ENCODE measurements at regions of chr14 and their contacts with region 1.

Region 1: DNA sequence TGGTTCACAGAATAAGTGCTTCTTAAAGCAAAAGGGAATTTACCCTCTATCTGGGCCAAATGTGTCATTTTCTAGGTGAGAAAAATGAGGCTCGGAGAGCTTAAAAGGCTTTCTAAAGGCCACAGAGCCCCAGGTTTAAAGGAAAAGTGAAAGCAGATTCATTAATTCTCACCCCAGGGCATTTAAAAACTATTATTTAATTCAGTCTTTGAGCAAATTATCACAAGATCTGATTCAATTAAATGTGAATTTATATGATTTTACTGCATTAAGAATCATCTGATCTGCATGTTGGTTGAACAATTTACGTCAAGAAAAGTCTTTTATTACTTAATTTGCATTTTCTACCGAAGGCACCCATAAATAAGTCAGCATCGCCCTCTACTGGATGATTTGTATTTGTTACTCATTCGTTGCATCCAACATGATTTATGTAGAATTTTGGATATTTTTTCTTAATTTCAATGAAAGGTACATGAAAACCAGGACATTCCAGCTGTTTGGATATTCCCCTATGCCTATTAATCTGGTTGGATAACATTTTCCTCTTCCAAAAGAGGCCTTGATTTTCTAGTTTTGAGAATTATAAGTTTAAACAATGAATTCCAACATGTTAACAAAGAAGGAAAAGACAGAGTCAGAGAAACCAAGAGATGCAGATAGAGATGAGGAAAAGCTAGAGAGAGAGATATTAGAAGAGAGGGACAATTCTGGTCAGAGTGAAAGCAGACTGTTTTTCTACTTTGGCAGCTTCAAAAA is 19.1 kb upstream of the DHRS7 start:
- DNase-seq: peak in 3 of 5 donors; percentile 12 to 72 (median 71)
- H3K4me3 ChIP-seq: peak overlapping the region; percentile 42
- H3K4me3 Mint-ChIP-seq: peak overlapping the region; percentile 74 to 89 (median 80)
- H3K27ac ChIP-seq: peak overlapping the region; percentile 12
- H3K27ac Mint-ChIP-seq: peak overlapping the region; percentile 48 to 97 (median 92)
- H3K4me1 ChIP-seq: peaks cover 6% of the 10 kb centered on the region
- H3K4me1 Mint-ChIP-seq: peaks cover 7 to 15% (median 11%) of the 10 kb centered on the region in 3 donors
- H3K27me3 ChIP-seq: no peaks in the 10 kb centered on the region
- H3K27me3 Mint-ChIP-seq: peaks cover 0 to 2% of the 10 kb centered on the region in 2 donors

Region 2: DNA sequence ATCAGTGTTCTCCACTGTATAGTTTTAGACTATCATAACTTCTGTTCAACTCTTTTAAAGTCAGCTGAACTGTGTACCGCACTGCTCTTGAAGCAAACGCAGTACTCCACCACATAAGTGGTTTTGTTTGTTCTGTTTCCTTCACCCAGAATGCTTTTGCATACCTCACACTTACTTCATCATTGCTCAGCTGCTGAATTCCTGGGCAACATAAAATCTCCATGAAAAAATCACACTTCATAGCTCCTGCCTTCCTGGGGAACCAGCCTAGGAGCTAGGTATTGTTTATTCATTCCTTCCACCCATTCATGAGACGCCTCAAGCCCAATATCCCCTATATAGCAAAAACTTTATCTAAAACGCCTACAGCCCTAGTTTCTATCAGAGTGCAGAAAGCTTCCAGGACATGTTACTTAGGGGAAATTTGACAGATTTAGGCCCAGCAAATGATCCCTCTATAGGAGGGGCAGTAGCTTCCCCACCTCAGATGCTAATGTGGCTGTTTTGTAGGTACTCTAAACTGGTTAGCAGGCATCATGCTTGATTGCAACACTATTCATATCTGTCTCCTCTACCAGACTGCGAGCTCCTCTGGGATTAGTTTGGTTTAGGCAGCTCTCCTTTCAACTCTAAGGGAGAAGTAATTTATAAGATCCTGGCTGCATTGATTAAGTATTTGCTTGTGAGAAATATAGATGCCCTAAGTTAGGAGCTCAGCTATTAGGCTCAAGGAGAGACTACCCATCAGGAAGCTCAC is 219.9 kb before region 1 on chr14:
- CTCF ChIA-PET with region 1: interaction called, 131 read pairs
- POLR2A ChIA-PET with region 1: interaction called, 3 read pairs
- DNase-seq: peak in 1 of 5 donors; percentile 44
- H3K4me3 ChIP-seq: no peak overlapping the region
- H3K4me3 Mint-ChIP-seq: peak overlapping the region; percentile 83 to 94 (median 90)
- H3K27ac ChIP-seq: no peak overlapping the region
- H3K27ac Mint-ChIP-seq: peak overlapping the region in 7 of 8 donors; percentile 56 to 98 (median 93)
- H3K4me1 ChIP-seq: no peaks in the 10 kb centered on the region
- H3K4me1 Mint-ChIP-seq: peaks cover 10 to 23% (median 14%) of the 10 kb centered on the region in 3 donors
- H3K27me3 ChIP-seq: no peaks in the 10 kb centered on the region
- H3K27me3 Mint-ChIP-seq: peaks cover 4 to 6% of the 10 kb centered on the region in 2 donors

Region 3: GRCh38 chr14:60064491-60065072 is 119.7 kb before region 1 on chr14:
- CTCF ChIA-PET with region 1: interaction called, 71 read pairs
- POLR2A ChIA-PET with region 1: no interaction called
- DNase-seq: peak in 2 of 5 donors; percentile 23 to 29
- H3K4me3 ChIP-seq: no peak overlapping the region
- H3K4me3 Mint-ChIP-seq: no peak overlapping the region
- H3K27ac ChIP-seq: no peak overlapping the region
- H3K27ac Mint-ChIP-seq: no peak overlapping the region
- H3K4me1 ChIP-seq: no peaks in the 10 kb centered on the region
- H3K4me1 Mint-ChIP-seq: no peaks in the 10 kb centered on the region
- H3K27me3 ChIP-seq: no peaks in the 10 kb centered on the region
- H3K27me3 Mint-ChIP-seq: peaks cover 2 to 17% of the 10 kb centered on the region in 2 donors

Region 4: DNA sequence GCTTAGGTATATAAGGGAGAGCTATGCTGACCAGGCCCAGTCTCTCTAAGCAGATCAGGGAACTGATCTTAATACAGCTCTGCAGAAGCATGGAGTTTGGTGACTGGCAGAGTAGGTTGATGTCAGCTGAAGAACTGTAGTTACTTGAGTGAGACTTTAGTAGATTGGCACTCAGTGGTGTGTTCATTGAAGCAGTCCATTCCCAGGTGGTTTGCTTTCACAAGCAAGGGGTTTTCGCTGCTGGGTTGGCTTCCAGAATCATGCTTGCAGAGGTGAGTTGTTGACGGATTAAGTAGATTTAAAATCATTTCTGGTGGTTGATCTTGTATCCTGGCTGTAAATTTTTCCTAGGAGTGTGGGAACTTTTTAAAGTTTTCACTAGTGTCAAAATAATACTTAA is 12.6 kb before region 1 on chr14:
- CTCF ChIA-PET with region 1: interaction called, 49 read pairs
- POLR2A ChIA-PET with region 1: no interaction called
- DNase-seq: no peak
- H3K4me3 ChIP-seq: no peak overlapping the region
- H3K4me3 Mint-ChIP-seq: no peak overlapping the region
- H3K27ac ChIP-seq: no peak overlapping the region
- H3K27ac Mint-ChIP-seq: no peak overlapping the region
- H3K4me1 ChIP-seq: peaks cover under 1% of the 10 kb centered on the region
- H3K4me1 Mint-ChIP-seq: peaks cover under 1 to 2% (median 2%) of the 10 kb centered on the region in 3 donors
- H3K27me3 ChIP-seq: no peaks in the 10 kb centered on the region
- H3K27me3 Mint-ChIP-seq: peaks cover 2 to 6% of the 10 kb centered on the region in 2 donors

Region 5: GRCh38 chr14:60248697-60249318 is 64.5 kb after region 1 on chr14 and contains the start of gene PPM1A:
- CTCF ChIA-PET with region 1: interaction called, 16 read pairs
- POLR2A ChIA-PET with region 1: interaction called, 4 read pairs
- DNase-seq: peak; percentile 93 to 97 (median 94)
- H3K4me3 ChIP-seq: peak within 1 kb of the TSS; percentile 78
- H3K4me3 Mint-ChIP-seq: peak within 1 kb of the TSS; percentile 90 to 99 (median 95)
- H3K27ac ChIP-seq: peak within 1 kb of the TSS; percentile 94
- H3K27ac Mint-ChIP-seq: peak within 1 kb of the TSS; percentile 97 to 100 (median 100)
- H3K4me1 ChIP-seq: peaks cover 24% of the 10 kb centered on the region
- H3K4me1 Mint-ChIP-seq: peaks cover 50 to 52% (median 52%) of the 10 kb centered on the region in 3 donors
- H3K27me3 ChIP-seq: no peaks in the 10 kb centered on the region
- H3K27me3 Mint-ChIP-seq: peaks cover 0 to 4% of the 10 kb centered on the region in 2 donors
- total RNA-seq, gene PPM1A: 54.6 to 55.3 TPM

Region 6: DNA sequence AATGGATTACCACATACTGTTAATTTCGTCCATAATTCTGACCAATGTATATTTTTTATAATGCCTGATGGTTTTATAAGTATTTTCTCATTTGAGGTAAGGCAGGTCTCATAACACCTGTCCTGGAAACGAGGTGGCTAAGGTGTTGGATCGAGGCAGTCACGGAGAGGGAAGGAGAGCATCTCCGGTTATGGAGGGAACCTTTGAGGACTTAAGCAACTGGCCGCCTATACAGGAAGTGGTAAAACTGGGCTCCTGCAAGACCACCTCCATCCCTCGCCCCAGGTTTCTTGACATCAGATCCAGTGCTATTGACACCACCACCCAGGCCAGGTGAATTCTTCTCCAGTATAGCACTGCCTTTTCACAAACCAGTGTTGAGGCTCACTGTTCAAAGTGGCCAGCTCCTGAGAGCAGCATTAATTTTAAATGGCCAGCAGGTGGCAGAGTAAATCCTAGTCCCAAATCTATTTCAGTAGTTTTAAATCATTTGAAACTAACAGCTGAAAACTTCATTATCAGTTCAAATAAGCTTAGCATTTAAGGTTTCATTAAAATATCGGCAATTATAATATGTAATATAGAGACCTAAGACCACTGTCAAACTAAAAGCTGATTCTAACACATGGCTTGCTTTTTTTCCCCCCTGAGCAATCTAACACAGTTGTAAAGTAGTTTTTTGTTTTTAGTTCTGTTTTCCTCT is 165.5 kb after region 1 on chr14:
- CTCF ChIA-PET with region 1: no interaction called
- POLR2A ChIA-PET with region 1: no interaction called
- DNase-seq: peak in 1 of 5 donors; percentile 18
- H3K4me3 ChIP-seq: no peak overlapping the region
- H3K4me3 Mint-ChIP-seq: no peak overlapping the region
- H3K27ac ChIP-seq: no peak overlapping the region
- H3K27ac Mint-ChIP-seq: no peak overlapping the region
- H3K4me1 ChIP-seq: no peaks in the 10 kb centered on the region
- H3K4me1 Mint-ChIP-seq: peaks cover 0 to 6% (median 4%) of the 10 kb centered on the region in 3 donors
- H3K27me3 ChIP-seq: no peaks in the 10 kb centered on the region
- H3K27me3 Mint-ChIP-seq: peaks cover 3 to 6% of the 10 kb centered on the region in 2 donors

Measured in CD8-positive, alpha-beta memory T cell (primary cell).